CD8-positive, alpha-beta memory T cell (primary cell): ENCODE measurements at regions of chr14 and their contacts with region 1.

Region 1: DNA sequence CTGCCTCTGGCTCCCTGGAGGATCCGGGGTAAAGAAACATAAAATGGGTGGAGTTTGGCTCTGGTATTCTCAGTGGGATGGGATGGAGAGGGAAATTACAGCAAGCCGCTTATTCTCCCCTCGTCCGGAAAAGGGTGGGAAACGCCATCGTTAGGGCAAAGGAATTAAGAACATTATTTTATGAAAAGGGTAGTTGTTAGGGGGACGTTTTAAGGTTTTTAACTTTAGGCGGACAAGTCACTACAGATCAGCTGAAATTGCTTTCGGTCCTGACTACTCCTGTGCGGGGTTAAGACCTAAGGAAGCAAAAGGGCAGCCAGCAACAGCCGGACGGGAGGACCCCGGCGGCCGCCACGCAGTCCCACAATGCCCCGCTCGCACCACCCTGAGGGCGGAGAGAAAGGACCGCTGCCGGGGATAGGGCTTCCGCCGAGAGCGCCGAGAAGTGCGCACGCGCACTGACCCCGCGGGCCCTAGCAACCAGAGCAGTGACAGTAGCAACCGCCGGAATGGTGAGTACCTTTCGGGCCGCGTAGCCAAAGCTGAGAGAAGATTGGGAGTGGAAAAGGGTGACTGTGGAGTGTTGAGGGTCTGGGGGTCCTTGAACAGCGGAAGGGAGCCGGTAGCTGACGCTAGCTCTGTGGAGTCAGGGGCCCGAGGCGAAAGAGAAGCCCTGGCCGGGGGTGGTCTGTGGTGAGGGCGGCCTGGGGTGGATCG is at the start of gene DNAL1:
- DNase-seq: peak; percentile 85 to 94 (median 89)
- H3K4me3 ChIP-seq: peak within 1 kb of the TSS; percentile 86
- H3K4me3 Mint-ChIP-seq: peak within 1 kb of the TSS; percentile 91 to 99 (median 94)
- H3K27ac ChIP-seq: peak within 1 kb of the TSS; percentile 77
- H3K27ac Mint-ChIP-seq: peak within 1 kb of the TSS; percentile 90 to 100 (median 94)
- H3K4me1 ChIP-seq: peaks cover 14% of the 10 kb centered on the region
- H3K4me1 Mint-ChIP-seq: peaks cover 15 to 21% (median 21%) of the 10 kb centered on the region in 3 donors
- H3K27me3 ChIP-seq: no peaks in the 10 kb centered on the region
- H3K27me3 Mint-ChIP-seq: peaks cover 0 to 1% of the 10 kb centered on the region in 2 donors
- total RNA-seq, gene DNAL1: 8.1 to 10.9 TPM

Region 2: GRCh38 chr14:73633116-73634010 is 11.3 kb before region 1 on chr14:
- CTCF ChIA-PET with region 1: interaction called, 11 read pairs
- POLR2A ChIA-PET with region 1: no interaction called
- DNase-seq: peak; percentile 30 to 70 (median 52)
- H3K4me3 ChIP-seq: peak overlapping the region; percentile 66
- H3K4me3 Mint-ChIP-seq: peak overlapping the region; percentile 67 to 90 (median 81)
- H3K27ac ChIP-seq: no peak overlapping the region
- H3K27ac Mint-ChIP-seq: peak overlapping the region in 5 of 8 donors; percentile 10 to 73 (median 49)
- H3K4me1 ChIP-seq: peaks cover 5% of the 10 kb centered on the region
- H3K4me1 Mint-ChIP-seq: peaks cover 5 to 7% (median 5%) of the 10 kb centered on the region in 3 donors
- H3K27me3 ChIP-seq: no peaks in the 10 kb centered on the region
- H3K27me3 Mint-ChIP-seq: peaks cover 3 to 20% of the 10 kb centered on the region in 2 donors

Region 3: GRCh38 chr14:73662487-73662943 is 17.8 kb after region 1 on chr14:
- CTCF ChIA-PET with region 1: no interaction called
- POLR2A ChIA-PET with region 1: no interaction called
- DNase-seq: no peak
- H3K4me3 ChIP-seq: no peak overlapping the region
- H3K4me3 Mint-ChIP-seq: no peak overlapping the region
- H3K27ac ChIP-seq: no peak overlapping the region
- H3K27ac Mint-ChIP-seq: peak overlapping the region in 1 of 8 donors; percentile 27
- H3K4me1 ChIP-seq: no peaks in the 10 kb centered on the region
- H3K4me1 Mint-ChIP-seq: no peaks in the 10 kb centered on the region
- H3K27me3 ChIP-seq: no peaks in the 10 kb centered on the region
- H3K27me3 Mint-ChIP-seq: no peaks in the 10 kb centered on the region